Gastrocnemius medialis (tissue), 4 donors: ENCODE measurements at regions of chr3 and their contacts with region 1.

Region 1: GRCh38 chr3:35733341-35733740 is 94.0 kb downstream of the ARPP21 start:
- DNase-seq: no peak
- ATAC-seq: no peak
- H3K4me3 ChIP-seq: no peak overlapping the region
- H3K27ac ChIP-seq: no peak overlapping the region
- H3K4me1 ChIP-seq: peaks cover 0 to 25% of the 10 kb centered on the region in 2 donors
- H3K27me3 ChIP-seq: no peaks in the 10 kb centered on the region
- CTCF ChIP-seq: no peak
- POLR2A ChIP-seq: no peak

Region 2: GRCh38 chr3:35677797-35678196 is 55.5 kb before region 1 on chr3:
- in situ Hi-C with region 1: no loop called
- intact Hi-C with region 1: no loop called
- DNase-seq: no peak
- ATAC-seq: peak; percentile 52 to 55
- H3K4me3 ChIP-seq: peak overlapping the region in 2 of 4 donors; percentile 47 to 51
- H3K27ac ChIP-seq: peak overlapping the region; percentile 77 to 94 (median 83)
- H3K4me1 ChIP-seq: peaks cover 37 to 72% of the 10 kb centered on the region in 2 donors
- H3K27me3 ChIP-seq: no peaks in the 10 kb centered on the region
- CTCF ChIP-seq: no peak
- POLR2A ChIP-seq: no peak

Region 3: DNA sequence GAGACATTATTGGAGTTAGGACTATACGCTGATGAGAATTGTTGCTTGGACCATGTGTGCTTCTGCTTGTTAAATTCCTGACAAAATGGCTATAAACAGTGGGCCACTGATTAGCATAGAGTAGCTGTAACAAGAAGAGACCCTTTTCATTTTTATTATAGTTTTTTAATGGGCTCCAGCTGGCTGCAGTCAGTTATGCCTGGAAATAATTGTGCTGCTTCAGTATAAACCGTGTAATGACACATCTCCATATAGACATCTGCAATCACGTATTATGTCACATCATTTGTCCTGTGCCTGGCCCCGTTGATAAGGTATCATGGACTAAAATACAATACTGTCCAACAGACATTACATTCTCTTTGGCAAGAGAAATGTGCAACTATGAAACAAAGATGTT is 43.1 kb before region 1 on chr3:
- in situ Hi-C with region 1: no loop called
- intact Hi-C with region 1: loop called (anchors 5 kb)
- DNase-seq: no peak
- ATAC-seq: no peak
- H3K4me3 ChIP-seq: no peak overlapping the region
- H3K27ac ChIP-seq: no peak overlapping the region
- H3K4me1 ChIP-seq: no peaks in the 10 kb centered on the region
- H3K27me3 ChIP-seq: no peaks in the 10 kb centered on the region
- CTCF ChIP-seq: no peak
- POLR2A ChIP-seq: no peak

Region 4: DNA sequence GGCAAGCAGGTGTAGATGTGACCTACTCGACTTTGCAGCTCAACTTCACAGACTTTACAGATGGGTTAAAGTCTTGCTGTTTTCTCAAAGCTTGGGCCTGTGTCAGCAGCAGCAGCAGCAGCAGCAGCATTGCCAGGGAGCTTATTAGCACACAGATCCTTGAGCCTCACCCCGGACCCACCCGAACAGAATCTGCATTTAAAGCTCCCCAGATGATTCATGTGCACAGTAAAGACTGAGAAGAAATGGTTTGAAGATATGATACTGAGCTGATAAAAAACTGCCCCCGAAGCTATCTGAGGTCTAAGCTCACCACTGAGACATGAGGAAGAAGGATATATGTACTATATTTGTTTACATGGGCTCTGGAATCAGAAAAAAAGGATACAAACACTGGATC is 137.7 kb after region 1 on chr3:
- in situ Hi-C with region 1: no loop called
- intact Hi-C with region 1: no loop called
- DNase-seq: no peak
- ATAC-seq: no peak
- H3K4me3 ChIP-seq: no peak overlapping the region
- H3K27ac ChIP-seq: no peak overlapping the region
- H3K4me1 ChIP-seq: no peaks in the 10 kb centered on the region
- H3K27me3 ChIP-seq: no peaks in the 10 kb centered on the region
- CTCF ChIP-seq: no peak
- POLR2A ChIP-seq: no peak